Esophagus muscularis mucosa (tissue), 4 donors: ENCODE measurements at regions of chr9 and their contacts with region 1.

Region 1: GRCh38 chr9:19230356-19231125 is at the start of gene DENND4C:
- DNase-seq: peak; percentile 95
- H3K4me3 ChIP-seq: peak within 1 kb of the TSS; percentile 79 to 96 (median 80)
- H3K27ac ChIP-seq: peak within 1 kb of the TSS; percentile 96 to 99 (median 98)
- H3K4me1 ChIP-seq: peaks cover 16 to 46% (median 36%) of the 10 kb centered on the region in 4 donors
- H3K27me3 ChIP-seq: no peaks in the 10 kb centered on the region
- CTCF ChIP-seq: no peak
- EP300 ChIP-seq: no peak
- POLR2A ChIP-seq: no peak
- total RNA-seq, gene DENND4C: 59.1 to 97.3 (median 88.1) TPM

Region 2: GRCh38 chr9:19184144-19184917 is 46.2 kb before region 1 on chr9:
- intact Hi-C with region 1: loop called (anchors 5 kb)
- DNase-seq: peak; percentile 96
- H3K4me3 ChIP-seq: peak overlapping the region in 1 of 4 donors; percentile 13
- H3K27ac ChIP-seq: peak overlapping the region; percentile 76 to 86 (median 85)
- H3K4me1 ChIP-seq: peaks cover 35 to 38% (median 36%) of the 10 kb centered on the region in 4 donors
- H3K27me3 ChIP-seq: no peaks in the 10 kb centered on the region
- CTCF ChIP-seq: no peak
- EP300 ChIP-seq: no peak
- POLR2A ChIP-seq: no peak

Region 3: DNA sequence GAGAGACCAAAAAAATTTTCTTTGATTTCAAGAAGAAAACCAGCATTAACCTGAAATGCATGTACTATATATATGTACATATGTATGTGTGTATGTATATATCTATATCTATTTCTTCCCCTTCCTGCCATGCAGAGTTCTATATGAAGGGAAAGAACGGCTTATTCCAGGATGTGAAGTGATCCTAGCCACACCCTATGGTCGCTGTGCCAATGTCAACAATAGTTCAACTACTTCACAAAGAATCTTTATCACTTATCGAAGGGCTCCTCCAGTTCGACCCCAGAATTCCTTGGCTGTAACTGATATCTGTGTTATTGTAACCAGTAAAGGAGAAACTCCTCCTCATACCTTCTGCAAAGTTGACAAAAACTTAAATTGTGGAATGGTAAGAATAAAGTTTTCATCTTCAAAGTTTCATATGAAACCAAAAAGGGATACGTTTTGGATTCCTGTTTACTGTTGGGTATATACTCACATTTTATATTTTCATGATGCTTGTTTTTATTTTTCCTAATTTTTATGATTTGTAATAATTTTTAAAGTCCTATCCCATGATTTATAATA is 56.2 kb after region 1 on chr9:
- intact Hi-C with region 1: no loop called
- DNase-seq: no peak
- H3K4me3 ChIP-seq: no peak overlapping the region
- H3K27ac ChIP-seq: no peak overlapping the region
- H3K4me1 ChIP-seq: peaks cover 17 to 39% (median 27%) of the 10 kb centered on the region in 4 donors
- H3K27me3 ChIP-seq: no peaks in the 10 kb centered on the region
- CTCF ChIP-seq: no peak
- EP300 ChIP-seq: no peak
- POLR2A ChIP-seq: no peak

Region 4: GRCh38 chr9:19379697-19380046 is 149.1 kb after region 1 on chr9:
- intact Hi-C with region 1: loop called (anchors 10 kb)
- DNase-seq: no peak
- H3K4me3 ChIP-seq: peak overlapping the region; percentile 59 to 85 (median 76)
- H3K27ac ChIP-seq: peak overlapping the region; percentile 92 to 95 (median 94)
- H3K4me1 ChIP-seq: peaks cover 22 to 32% (median 31%) of the 10 kb centered on the region in 4 donors
- H3K27me3 ChIP-seq: no peaks in the 10 kb centered on the region
- CTCF ChIP-seq: no peak
- EP300 ChIP-seq: no peak
- POLR2A ChIP-seq: no peak